AG04450 (cell line): ENCODE measurements at regions of chr20 and their contacts with region 1.

Region 1: DNA sequence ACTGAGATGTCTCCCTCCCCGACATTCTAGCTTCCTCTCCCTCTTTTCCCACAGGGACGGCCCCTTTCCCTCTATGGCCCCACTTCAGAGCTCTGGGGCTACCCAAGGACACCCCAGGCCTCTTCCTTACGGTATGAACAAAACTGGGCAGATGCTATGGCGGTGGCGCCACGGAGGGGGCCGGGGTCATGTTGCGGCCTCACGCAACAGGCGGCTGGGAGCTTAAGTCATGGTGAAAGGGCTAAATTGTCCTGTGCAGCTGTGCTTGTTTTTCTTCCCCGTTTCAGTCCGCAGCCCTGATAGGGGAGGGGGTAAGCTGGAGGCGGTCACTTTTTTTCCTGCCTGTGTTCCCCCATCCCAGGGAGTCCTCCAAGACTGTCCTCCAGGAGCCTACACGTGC is 17.6 kb upstream of the KIAA1755 start:
- DNase-seq: no peak
- H3K4me3 ChIP-seq: no peak overlapping the region
- H3K27ac ChIP-seq: no peak overlapping the region
- H3K27me3 ChIP-seq: no peaks in the 10 kb centered on the region
- CTCF ChIP-seq: no peak

Region 2: DNA sequence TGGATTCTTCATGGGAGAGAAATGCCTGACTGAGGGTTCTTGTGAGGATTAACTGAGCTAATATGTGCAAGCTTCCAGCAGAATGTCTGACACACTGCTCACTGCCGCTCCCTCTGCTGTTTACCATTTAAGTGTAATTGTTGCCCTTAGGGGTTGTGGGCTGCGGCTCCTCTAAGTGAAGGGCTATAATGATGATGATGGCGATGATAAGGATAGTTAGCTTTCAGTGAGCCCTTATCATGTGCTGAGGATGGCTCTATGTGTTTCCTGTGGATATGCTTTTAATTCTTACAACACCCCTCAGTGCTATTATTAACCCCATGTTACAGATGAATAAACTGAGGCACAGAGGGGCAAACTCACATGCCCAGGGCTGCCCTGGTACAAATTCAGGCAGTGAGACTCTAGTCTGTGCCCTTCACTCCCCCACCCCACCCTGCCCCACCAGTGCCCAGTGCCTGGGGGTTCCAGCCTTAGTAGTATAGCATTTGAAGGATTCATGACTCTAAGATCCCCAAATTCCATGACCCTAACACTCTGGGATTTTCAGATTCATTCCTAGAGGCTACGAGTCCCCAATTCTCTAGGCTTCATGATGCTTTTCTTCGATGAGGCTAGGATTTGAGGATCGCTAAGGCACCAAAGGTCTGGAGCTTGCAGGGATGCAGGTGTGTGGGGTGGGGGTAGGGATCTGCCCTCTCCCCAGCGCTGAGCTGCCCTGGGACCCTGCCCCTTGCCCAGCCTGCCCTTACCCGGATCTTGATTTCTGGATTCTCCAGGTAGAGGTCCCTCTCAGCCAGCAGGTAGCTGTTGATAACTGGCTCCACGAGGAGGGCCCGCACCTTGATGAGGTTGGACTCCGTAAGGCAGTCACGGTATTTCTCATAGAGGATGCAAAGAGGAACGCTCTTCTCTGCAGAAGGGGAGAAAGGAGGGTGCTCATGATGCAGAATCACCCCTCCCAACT is 146.3 kb before region 1 on chr20:
- CTCF ChIA-PET with region 1: no interaction called
- POLR2A ChIA-PET with region 1: interaction called, 14 read pairs
- DNase-seq: no peak
- H3K4me3 ChIP-seq: no peak overlapping the region
- H3K27ac ChIP-seq: no peak overlapping the region
- H3K27me3 ChIP-seq: no peaks in the 10 kb centered on the region
- CTCF ChIP-seq: no peak